Activated T-helper 2 cell treated with anti-CD3 and anti-CD28 coated beads, Interferon-gamma antibody, Interleukin-2, Interleukin-4, amounts not matched to agents 10 μg/mL and 5 μg/mL and 100 μg/mL, durations not matched to agents 14 hours and 24 hours and 36 hours (primary cell): ENCODE measurements at regions of chr1 and their contacts with region 1.

Region 1: GRCh38 chr1:55284852-55285251 is 69.7 kb upstream of the USP24 start:
- DNase-seq: no peak
- H3K4me3 Mint-ChIP-seq: no peak overlapping the region
- H3K27ac Mint-ChIP-seq: no peak overlapping the region
- H3K4me1 Mint-ChIP-seq: peaks cover 19% of the 10 kb centered on the region
- H3K27me3 Mint-ChIP-seq: peaks cover 13% of the 10 kb centered on the region

Region 2: DNA sequence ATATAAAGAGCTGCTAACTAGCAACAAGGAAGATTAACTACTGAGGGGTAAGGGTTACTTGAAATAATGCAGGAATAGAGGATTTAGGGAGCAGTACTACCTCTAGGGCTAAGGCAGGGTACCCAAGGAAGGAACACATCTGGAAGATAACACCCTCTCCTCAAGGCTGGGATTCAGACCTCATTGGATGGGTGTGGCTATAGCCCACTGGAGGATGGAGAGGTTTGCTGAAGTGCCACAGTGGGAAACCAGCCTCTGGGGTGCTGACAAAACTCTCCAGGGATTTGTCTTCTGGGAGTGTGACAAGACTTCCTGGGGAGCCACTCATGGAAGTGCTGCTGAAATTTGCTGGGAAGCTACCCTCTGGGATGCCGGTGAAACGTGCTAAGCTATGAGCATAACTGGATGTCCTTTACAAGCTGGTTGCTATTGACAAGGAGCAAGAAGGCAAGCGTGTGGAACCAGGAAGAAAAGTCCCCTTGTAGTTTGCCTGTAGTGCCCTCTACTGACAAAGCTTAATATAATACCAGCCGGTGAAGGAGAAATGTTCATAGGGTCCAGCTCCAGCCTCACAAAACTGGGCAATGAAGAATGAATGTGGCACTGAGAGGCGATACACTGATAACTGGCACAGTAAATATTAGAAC is 53.1 kb after region 1 on chr1:
- intact Hi-C with region 1: loop called (anchors 1 kb)
- DNase-seq: peak; percentile 9
- H3K4me3 Mint-ChIP-seq: no peak overlapping the region
- H3K27ac Mint-ChIP-seq: no peak overlapping the region
- H3K4me1 Mint-ChIP-seq: peaks cover 14% of the 10 kb centered on the region
- H3K27me3 Mint-ChIP-seq: peaks cover 7% of the 10 kb centered on the region

Region 3: GRCh38 chr1:55893155-55893554 is 608.3 kb after region 1 on chr1:
- intact Hi-C with region 1: loop called (anchors 10 kb)
- DNase-seq: no peak
- H3K4me3 Mint-ChIP-seq: no peak overlapping the region
- H3K27ac Mint-ChIP-seq: no peak overlapping the region
- H3K4me1 Mint-ChIP-seq: no peaks in the 10 kb centered on the region
- H3K27me3 Mint-ChIP-seq: no peaks in the 10 kb centered on the region

Region 4: GRCh38 chr1:56584910-56585528 is 1300.2 kb after region 1 on chr1:
- intact Hi-C with region 1: loop called (anchors 10 kb)
- DNase-seq: no peak
- H3K4me3 Mint-ChIP-seq: no peak overlapping the region
- H3K27ac Mint-ChIP-seq: no peak overlapping the region
- H3K4me1 Mint-ChIP-seq: no peaks in the 10 kb centered on the region
- H3K27me3 Mint-ChIP-seq: peaks cover 16% of the 10 kb centered on the region